ENCODE measurements at regions of chr2 and their contacts with region 1.

Region 1: GRCh38 chr2:233053928-233054784 is 6.0 kb upstream of the INPP5D start:
- DNase-seq: peak; percentile 52 to 72 (median 64)
- H3K4me3 ChIP-seq: no peak overlapping the region
- H3K4me3 Mint-ChIP-seq: peak overlapping the region in 5 of 7 donors; percentile 5 to 61 (median 27)
- H3K27ac ChIP-seq: no peak overlapping the region
- H3K27ac Mint-ChIP-seq: peak overlapping the region in 5 of 8 donors; percentile 25 to 86 (median 55)
- H3K4me1 ChIP-seq: peaks cover 19% of the 10 kb centered on the region
- H3K4me1 Mint-ChIP-seq: peaks cover 25 to 32% (median 26%) of the 10 kb centered on the region in 3 donors
- H3K27me3 ChIP-seq: no peaks in the 10 kb centered on the region
- H3K27me3 Mint-ChIP-seq: peaks cover 0 to 3% of the 10 kb centered on the region in 2 donors

Region 2: GRCh38 chr2:233012301-233012971 is 41.7 kb before region 1 on chr2:
- CTCF ChIA-PET with region 1: no interaction called
- POLR2A ChIA-PET with region 1: no interaction called
- DNase-seq: no peak
- H3K4me3 ChIP-seq: no peak overlapping the region
- H3K4me3 Mint-ChIP-seq: no peak overlapping the region
- H3K27ac ChIP-seq: no peak overlapping the region
- H3K27ac Mint-ChIP-seq: no peak overlapping the region
- H3K4me1 ChIP-seq: no peaks in the 10 kb centered on the region
- H3K4me1 Mint-ChIP-seq: no peaks in the 10 kb centered on the region
- H3K27me3 ChIP-seq: no peaks in the 10 kb centered on the region
- H3K27me3 Mint-ChIP-seq: peaks cover 1 to 6% of the 10 kb centered on the region in 2 donors

Region 3: DNA sequence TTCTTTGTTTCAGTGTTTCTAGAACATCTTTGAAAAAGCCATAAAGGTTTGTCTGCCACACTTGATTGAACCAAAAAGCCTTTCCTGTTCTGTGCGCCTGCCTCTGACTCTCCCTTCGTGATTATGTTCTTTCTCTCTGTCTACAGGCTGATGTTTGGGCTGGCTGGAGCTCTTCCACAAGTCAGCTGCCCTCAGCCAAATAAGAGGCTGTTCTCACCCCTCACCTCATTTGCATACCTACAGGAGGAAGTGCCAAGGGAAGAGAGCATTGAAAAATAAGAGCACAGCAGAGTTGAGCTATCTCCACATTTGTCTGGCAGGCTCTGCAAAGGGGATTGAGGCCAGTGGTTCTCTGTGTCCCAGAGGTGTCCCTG is 21.8 kb after region 1 on chr2:
- CTCF ChIA-PET with region 1: interaction called, 52 read pairs
- POLR2A ChIA-PET with region 1: interaction called, 43 read pairs
- DNase-seq: peak in 3 of 5 donors; percentile 49 to 68 (median 66)
- H3K4me3 ChIP-seq: peak overlapping the region; percentile 60
- H3K4me3 Mint-ChIP-seq: no peak overlapping the region
- H3K27ac ChIP-seq: peak overlapping the region; percentile 38
- H3K27ac Mint-ChIP-seq: no peak overlapping the region
- H3K4me1 ChIP-seq: peaks cover 84% of the 10 kb centered on the region
- H3K4me1 Mint-ChIP-seq: peaks cover 35 to 51% (median 45%) of the 10 kb centered on the region in 3 donors
- H3K27me3 ChIP-seq: no peaks in the 10 kb centered on the region
- H3K27me3 Mint-ChIP-seq: no peaks in the 10 kb centered on the region

Region 4: DNA sequence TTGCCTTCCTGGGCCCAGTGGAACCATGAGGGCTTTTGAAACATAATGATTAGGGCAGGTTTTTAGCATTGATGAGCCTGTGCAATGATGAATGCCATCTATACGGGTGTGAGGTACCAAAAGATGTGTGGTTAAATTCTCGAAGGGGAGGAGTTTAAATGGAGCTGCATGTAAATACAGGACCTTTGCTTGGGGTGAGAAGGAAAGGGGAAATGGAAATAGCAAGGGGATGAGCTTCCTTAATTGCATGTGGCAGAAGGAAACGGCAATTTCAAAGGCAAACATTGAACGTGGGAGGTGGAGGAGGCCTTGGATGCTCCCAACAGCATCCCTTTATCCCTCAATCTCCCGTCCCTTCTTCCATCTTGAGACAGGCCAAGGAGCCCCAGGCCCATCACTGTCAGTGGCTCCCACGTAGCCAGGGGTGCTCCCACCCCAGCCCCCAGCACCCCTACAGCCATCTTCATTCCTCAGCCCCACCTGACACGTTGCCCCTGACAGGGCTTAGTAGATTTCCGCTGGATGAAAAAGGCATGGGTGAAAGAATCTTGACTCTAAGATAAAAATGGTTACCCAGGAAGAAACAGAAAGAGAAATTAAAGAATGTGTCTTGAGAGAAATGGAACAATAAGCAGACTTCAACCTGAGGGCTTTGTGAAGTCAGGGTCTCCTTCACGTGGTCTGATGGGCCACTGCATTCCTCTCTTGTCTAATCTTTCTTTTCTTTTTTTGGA is 38.4 kb after region 1 on chr2:
- CTCF ChIA-PET with region 1: interaction called, 11 read pairs
- POLR2A ChIA-PET with region 1: no interaction called
- DNase-seq: no peak
- H3K4me3 ChIP-seq: no peak overlapping the region
- H3K4me3 Mint-ChIP-seq: peak overlapping the region in 3 of 7 donors; percentile 23 to 32 (median 25)
- H3K27ac ChIP-seq: no peak overlapping the region
- H3K27ac Mint-ChIP-seq: peak overlapping the region; percentile 24 to 91 (median 70)
- H3K4me1 ChIP-seq: peaks cover 38% of the 10 kb centered on the region
- H3K4me1 Mint-ChIP-seq: peaks cover 61 to 87% (median 87%) of the 10 kb centered on the region in 3 donors
- H3K27me3 ChIP-seq: no peaks in the 10 kb centered on the region
- H3K27me3 Mint-ChIP-seq: no peaks in the 10 kb centered on the region

Region 5: DNA sequence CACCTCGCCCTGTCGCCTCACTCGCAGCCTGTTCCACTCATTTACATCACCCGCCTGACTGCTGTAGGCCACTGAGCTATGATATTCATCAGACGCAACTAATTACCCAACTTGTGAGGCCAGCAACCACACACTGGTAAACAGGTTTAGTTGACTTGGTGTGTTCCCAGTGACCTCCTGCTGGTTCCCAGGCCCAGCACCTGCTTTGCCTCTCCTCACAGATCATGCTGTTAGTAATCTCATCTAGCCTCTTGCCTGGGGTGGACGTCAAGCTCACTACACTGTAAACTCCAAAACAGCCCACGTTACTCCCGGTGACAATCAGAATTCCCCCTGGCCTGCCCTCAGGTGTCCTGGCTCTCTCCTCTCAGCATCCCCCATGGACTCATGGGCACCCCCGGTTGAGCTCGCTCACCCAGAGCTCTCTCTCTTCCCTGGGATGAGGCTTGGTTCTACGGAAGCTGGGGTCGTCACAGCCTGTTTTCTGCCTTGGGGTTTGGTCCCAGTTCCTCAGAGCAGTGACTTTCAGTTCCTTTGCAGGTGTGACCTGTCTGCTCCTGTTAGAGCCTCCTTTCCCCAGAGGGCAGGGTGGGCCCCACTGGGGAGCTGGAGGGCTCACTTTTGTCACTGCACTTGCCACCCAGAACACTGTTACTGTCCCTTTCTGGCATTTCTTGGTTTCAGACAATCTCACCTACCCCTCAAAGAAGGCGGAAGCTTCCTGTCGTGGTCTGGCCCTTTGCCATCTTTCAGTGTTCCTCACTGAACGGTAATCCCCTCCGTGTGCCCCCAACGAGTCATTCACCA is 46.2 kb after region 1 on chr2:
- CTCF ChIA-PET with region 1: interaction called, 14 read pairs
- POLR2A ChIA-PET with region 1: interaction called, 12 read pairs
- DNase-seq: peak; percentile 55 to 87 (median 70)
- H3K4me3 ChIP-seq: peak overlapping the region; percentile 42
- H3K4me3 Mint-ChIP-seq: peak overlapping the region; percentile 59 to 91 (median 84)
- H3K27ac ChIP-seq: peak overlapping the region; percentile 49
- H3K27ac Mint-ChIP-seq: peak overlapping the region; percentile 84 to 98 (median 95)
- H3K4me1 ChIP-seq: peaks cover 49% of the 10 kb centered on the region
- H3K4me1 Mint-ChIP-seq: peaks cover 77 to 88% (median 87%) of the 10 kb centered on the region in 3 donors
- H3K27me3 ChIP-seq: no peaks in the 10 kb centered on the region
- H3K27me3 Mint-ChIP-seq: peaks cover 0 to 1% of the 10 kb centered on the region in 2 donors

Region 6: DNA sequence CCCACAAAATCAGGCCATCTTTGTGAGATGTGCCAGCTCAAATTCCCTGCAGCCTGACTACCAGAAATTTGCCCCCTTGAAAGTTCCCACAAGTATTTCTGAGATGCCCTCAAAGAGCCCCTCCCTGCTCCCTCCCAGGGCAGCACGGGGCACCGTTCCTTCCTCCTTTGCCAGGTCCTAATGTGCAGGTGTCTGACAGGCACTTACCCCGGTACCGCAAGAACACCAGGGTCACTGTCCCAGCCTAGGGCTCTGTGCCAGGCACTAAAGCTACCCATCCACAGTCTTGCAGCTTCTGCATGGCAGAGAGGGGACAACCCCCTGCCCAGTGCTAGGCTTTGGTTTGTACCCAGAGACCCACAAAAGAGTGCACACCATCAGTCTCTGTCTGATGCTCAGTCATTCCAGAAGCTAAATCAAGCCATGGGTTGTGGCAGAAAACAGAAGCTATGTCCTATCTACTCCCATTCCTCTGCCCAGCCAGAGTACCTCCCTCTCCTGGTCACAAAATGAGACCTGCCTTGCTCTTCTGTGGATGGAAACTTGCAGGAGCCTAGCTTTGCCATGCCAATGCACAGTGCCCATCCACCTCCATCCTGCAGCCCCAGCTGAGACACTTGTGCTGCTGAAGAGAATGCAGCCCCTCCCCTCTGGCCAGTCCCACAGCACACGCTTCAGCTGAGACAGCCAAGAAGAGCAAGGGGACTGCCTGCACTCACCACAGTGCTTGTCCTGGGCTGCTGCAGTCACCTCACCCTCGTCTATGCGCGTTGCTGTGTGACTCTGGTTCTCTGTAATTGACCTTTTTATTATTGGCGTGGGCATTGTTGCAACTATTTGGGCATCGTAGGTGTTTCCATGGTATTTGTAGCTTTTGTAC is 54.7 kb after region 1 on chr2:
- CTCF ChIA-PET with region 1: interaction called, 12 read pairs
- POLR2A ChIA-PET with region 1: no interaction called
- DNase-seq: no peak
- H3K4me3 ChIP-seq: no peak overlapping the region
- H3K4me3 Mint-ChIP-seq: peak overlapping the region in 6 of 7 donors; percentile 4 to 83 (median 39)
- H3K27ac ChIP-seq: no peak overlapping the region
- H3K27ac Mint-ChIP-seq: peak overlapping the region; percentile 10 to 96 (median 74)
- H3K4me1 ChIP-seq: peaks cover 61% of the 10 kb centered on the region
- H3K4me1 Mint-ChIP-seq: peaks cover 74 to 88% (median 87%) of the 10 kb centered on the region in 3 donors
- H3K27me3 ChIP-seq: no peaks in the 10 kb centered on the region
- H3K27me3 Mint-ChIP-seq: no peaks in the 10 kb centered on the region